OCI-LY7 (cell line): ENCODE measurements at regions of chr22 and their contacts with region 1.

Region 1: GRCh38 chr22:38872172-38872830 is at the start of gene CBX6:
- DNase-seq: peak; percentile 96
- H3K4me3 ChIP-seq: peak within 1 kb of the TSS; percentile 82
- H3K27ac ChIP-seq: peak within 1 kb of the TSS; percentile 78
- H3K4me1 ChIP-seq: peaks cover 41% of the 10 kb centered on the region
- CTCF ChIP-seq: no peak
- total RNA-seq, gene CBX6: 41.9 and 45.2 TPM in 2 replicates

Region 2: DNA sequence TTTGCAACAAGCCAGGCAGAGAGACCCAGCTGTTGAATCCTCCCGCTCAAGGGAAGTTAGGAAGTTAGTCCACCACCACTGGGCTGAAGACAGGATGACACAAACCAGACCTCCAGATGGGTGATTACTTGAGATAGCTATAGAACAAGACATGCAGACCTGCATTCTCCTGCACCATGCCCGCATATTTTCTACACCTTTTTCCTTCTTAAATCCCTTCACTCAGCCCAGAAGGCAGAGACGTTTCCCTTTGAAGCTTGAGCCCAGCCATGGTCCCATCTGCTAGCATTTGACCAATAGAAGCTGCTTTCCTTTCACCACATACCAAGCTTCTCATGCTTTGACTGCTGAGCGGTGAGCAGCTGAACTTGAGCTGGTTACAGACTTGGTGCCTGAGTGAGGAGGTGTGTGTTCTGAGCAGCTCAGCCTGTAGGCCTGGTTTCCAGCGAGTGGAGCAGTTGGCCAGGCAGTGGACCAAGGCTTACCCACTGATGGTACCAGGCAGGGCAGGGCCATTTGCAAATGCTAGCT is 28.9 kb after region 1 on chr22:
- CTCF ChIA-PET with region 1: no interaction called
- POLR2A ChIA-PET with region 1: interaction called, 4 read pairs
- intact Hi-C with region 1: loop called (anchors 1 kb)
- DNase-seq: peak; percentile 38
- H3K4me3 ChIP-seq: peak overlapping the region; percentile 18
- H3K27ac ChIP-seq: peak overlapping the region; percentile 56
- H3K4me1 ChIP-seq: peaks cover 35% of the 10 kb centered on the region
- CTCF ChIP-seq: no peak

Region 3: GRCh38 chr22:38973289-38974169 is 101.2 kb after region 1 on chr22:
- CTCF ChIA-PET with region 1: no interaction called
- POLR2A ChIA-PET with region 1: interaction called, 3 read pairs
- intact Hi-C with region 1: loop called (anchors 2 kb)
- DNase-seq: peak; percentile 75
- H3K4me3 ChIP-seq: no peak overlapping the region
- H3K27ac ChIP-seq: no peak overlapping the region
- H3K4me1 ChIP-seq: peaks cover 6% of the 10 kb centered on the region
- CTCF ChIP-seq: peak; percentile 91

Region 4: DNA sequence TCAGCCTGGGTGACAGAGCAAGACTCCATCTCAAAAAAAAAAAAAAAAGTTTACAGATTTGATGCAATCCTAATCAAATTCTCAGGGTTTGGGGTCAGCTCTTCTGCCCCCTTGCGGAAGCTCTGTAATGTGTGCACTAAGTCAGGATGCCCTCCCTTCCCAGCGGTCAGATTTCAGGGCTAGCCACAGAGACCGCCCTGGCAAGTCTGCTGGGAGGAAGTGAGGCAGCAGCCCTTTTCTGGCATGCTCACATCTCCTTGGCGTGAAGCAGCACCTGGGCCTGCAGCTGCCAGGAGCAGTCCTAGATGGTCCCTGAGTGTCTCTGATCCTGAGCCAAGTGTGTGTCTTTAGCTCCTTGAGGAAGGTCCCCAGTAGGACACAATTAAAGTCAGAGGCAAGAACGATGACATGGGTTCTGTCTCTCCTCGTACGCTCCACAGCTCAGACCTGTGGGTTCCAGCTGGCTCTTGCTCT is 130.9 kb after region 1 on chr22:
- CTCF ChIA-PET with region 1: interaction called, 3 read pairs
- POLR2A ChIA-PET with region 1: no interaction called
- intact Hi-C with region 1: loop called (anchors 1 kb)
- DNase-seq: peak; percentile 88
- H3K4me3 ChIP-seq: peak overlapping the region; percentile 1
- H3K27ac ChIP-seq: peak overlapping the region; percentile 63
- H3K4me1 ChIP-seq: peaks cover 21% of the 10 kb centered on the region
- CTCF ChIP-seq: peak; percentile 86

Region 5: GRCh38 chr22:39117585-39118191 is 245.4 kb after region 1 on chr22:
- CTCF ChIA-PET with region 1: no interaction called
- POLR2A ChIA-PET with region 1: no interaction called
- intact Hi-C with region 1: loop called (anchors 1 kb)
- DNase-seq: peak; percentile 84
- H3K4me3 ChIP-seq: peak overlapping the region; percentile 43
- H3K27ac ChIP-seq: peak overlapping the region; percentile 46
- H3K4me1 ChIP-seq: peaks cover 50% of the 10 kb centered on the region
- CTCF ChIP-seq: peak; percentile 90

Region 6: GRCh38 chr22:39123751-39124601 is 251.7 kb after region 1 on chr22:
- CTCF ChIA-PET with region 1: no interaction called
- POLR2A ChIA-PET with region 1: interaction called, 4 read pairs
- intact Hi-C with region 1: loop called (anchors 1 kb)
- DNase-seq: no peak
- H3K4me3 ChIP-seq: no peak overlapping the region
- H3K27ac ChIP-seq: no peak overlapping the region
- H3K4me1 ChIP-seq: no peaks in the 10 kb centered on the region
- CTCF ChIP-seq: no peak

Region 7: GRCh38 chr22:39319270-39320022 is 447.1 kb after region 1 on chr22 and contains the start of gene RPL3:
- CTCF ChIA-PET with region 1: no interaction called
- POLR2A ChIA-PET with region 1: no interaction called
- intact Hi-C with region 1: loop called (anchors 5 kb)
- DNase-seq: peak; percentile 98
- H3K4me3 ChIP-seq: peak within 1 kb of the TSS; percentile 94
- H3K27ac ChIP-seq: peak within 1 kb of the TSS; percentile 82
- H3K4me1 ChIP-seq: peaks cover 36% of the 10 kb centered on the region
- CTCF ChIP-seq: 0 out of 2 replicates have a peak, but pooled peaks have one; percentile 13
- total RNA-seq, gene RPL3: 2,313 and 2,662 TPM in 2 replicates